ENCODE measurements at regions of chr4 and their contacts with region 1.

Region 1: GRCh38 chr4:87848622-87849351 is 16.0 kb downstream of the MEPE start:
- DNase-seq: peak; percentile 53
- H3K4me3 ChIP-seq: no peak overlapping the region
- H3K27ac ChIP-seq: no peak overlapping the region
- H3K4me1 ChIP-seq: no peaks in the 10 kb centered on the region
- H3K27me3 ChIP-seq: no peaks in the 10 kb centered on the region
- CTCF ChIP-seq: 0 out of 2 replicates have a peak, but pooled peaks have one; percentile 24

Region 2: DNA sequence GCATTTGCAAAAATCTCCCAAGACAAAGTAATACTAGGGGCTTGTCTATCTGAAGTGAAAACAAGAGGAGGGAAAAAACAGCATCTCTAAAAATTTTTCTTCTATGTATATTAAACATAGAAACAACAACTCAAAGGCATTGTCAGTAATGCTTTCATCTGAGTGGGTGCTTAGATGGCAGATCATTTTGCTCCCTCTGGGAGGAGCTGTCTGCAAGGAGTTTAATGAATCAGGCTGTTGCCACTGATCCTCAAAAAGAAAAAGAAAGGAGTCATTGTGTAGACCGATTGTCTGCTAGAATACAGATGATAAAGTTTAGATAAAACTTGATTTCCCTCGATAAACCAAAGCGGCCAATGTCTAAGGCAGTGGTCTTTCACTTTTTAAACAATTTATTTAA is 578.6 kb before region 1 on chr4:
- CTCF ChIA-PET with region 1: no interaction called
- POLR2A ChIA-PET with region 1: no interaction called
- intact Hi-C with region 1: loop called (anchors 10 kb)
- DNase-seq: peak; percentile 51
- H3K4me3 ChIP-seq: no peak overlapping the region
- H3K27ac ChIP-seq: no peak overlapping the region
- H3K4me1 ChIP-seq: no peaks in the 10 kb centered on the region
- H3K27me3 ChIP-seq: no peaks in the 10 kb centered on the region
- CTCF ChIP-seq: peak; percentile 66

Region 3: DNA sequence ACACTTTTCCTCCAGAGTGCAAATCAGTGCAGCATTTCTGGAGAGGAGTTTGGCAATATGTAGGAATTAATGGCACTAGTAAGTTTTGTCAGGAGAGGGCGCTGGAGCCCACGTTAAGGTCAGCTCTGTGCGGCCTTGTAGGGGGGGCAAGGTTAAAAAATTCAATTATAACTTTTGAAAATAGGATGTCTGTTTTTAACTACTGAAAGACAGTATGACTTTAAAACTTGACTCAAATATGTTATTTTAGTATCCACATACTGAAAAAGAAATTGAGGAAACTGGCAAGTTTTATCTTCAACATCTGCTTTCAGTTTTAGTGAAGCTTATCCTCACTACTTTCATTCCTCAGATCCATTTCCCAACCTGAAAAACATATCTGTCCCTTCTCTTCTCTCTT is 495.2 kb before region 1 on chr4:
- CTCF ChIA-PET with region 1: no interaction called
- POLR2A ChIA-PET with region 1: no interaction called
- intact Hi-C with region 1: loop called (anchors 5 kb)
- DNase-seq: peak; percentile 39
- H3K4me3 ChIP-seq: no peak overlapping the region
- H3K27ac ChIP-seq: no peak overlapping the region
- H3K4me1 ChIP-seq: no peaks in the 10 kb centered on the region
- H3K27me3 ChIP-seq: no peaks in the 10 kb centered on the region
- CTCF ChIP-seq: peak; percentile 57

Region 4: GRCh38 chr4:87973283-87974169 is 124.7 kb after region 1 on chr4:
- CTCF ChIA-PET with region 1: interaction called, 19 read pairs
- POLR2A ChIA-PET with region 1: interaction called, 7 read pairs
- intact Hi-C with region 1: loop called (anchors 1 kb)
- DNase-seq: peak; percentile 63
- H3K4me3 ChIP-seq: no peak overlapping the region
- H3K27ac ChIP-seq: no peak overlapping the region
- H3K4me1 ChIP-seq: no peaks in the 10 kb centered on the region
- H3K27me3 ChIP-seq: no peaks in the 10 kb centered on the region
- CTCF ChIP-seq: peak; percentile 58

Region 5: DNA sequence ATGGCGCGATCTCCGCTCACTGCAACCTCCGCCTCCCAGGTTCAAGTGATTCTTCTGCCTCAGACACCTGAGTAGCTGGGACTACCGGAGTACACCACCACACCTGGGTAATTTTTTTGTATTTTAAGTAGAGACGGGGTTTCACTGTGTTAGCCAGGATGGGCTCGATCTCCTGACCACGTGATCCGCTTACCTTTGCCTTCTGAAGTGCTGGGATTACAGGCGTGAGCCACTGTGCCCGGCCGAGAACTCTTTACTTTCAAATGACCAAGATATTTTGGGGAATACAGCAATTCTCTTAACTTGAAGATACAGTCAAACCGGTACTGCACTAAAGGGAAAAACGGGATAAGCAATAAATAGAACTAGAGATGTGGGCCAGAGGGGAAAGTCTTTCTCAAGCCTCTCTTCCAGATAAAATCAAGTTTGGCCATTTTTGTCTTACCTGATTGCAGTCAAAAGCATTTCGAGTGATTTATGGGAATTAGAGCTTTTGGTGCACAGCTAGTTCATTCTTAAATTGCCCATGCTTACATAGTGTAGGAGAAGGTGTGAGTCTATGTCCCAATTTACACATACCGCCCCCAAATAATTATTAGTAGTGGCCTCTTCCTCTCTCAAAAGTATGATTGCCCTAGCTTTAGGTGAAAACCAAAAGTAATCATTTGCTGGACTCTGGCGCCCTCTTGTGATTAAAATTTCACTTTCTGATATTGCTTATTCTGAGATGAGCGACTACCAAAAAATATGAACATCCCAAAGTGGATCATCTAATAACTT is 362.9 kb after region 1 on chr4:
- CTCF ChIA-PET with region 1: interaction called, 8 read pairs
- POLR2A ChIA-PET with region 1: no interaction called
- intact Hi-C with region 1: loop called (anchors 5 kb)
- DNase-seq: peak; percentile 40
- H3K4me3 ChIP-seq: no peak overlapping the region
- H3K27ac ChIP-seq: no peak overlapping the region
- H3K4me1 ChIP-seq: no peaks in the 10 kb centered on the region
- H3K27me3 ChIP-seq: no peaks in the 10 kb centered on the region
- CTCF ChIP-seq: peak; percentile 56

Region 6: DNA sequence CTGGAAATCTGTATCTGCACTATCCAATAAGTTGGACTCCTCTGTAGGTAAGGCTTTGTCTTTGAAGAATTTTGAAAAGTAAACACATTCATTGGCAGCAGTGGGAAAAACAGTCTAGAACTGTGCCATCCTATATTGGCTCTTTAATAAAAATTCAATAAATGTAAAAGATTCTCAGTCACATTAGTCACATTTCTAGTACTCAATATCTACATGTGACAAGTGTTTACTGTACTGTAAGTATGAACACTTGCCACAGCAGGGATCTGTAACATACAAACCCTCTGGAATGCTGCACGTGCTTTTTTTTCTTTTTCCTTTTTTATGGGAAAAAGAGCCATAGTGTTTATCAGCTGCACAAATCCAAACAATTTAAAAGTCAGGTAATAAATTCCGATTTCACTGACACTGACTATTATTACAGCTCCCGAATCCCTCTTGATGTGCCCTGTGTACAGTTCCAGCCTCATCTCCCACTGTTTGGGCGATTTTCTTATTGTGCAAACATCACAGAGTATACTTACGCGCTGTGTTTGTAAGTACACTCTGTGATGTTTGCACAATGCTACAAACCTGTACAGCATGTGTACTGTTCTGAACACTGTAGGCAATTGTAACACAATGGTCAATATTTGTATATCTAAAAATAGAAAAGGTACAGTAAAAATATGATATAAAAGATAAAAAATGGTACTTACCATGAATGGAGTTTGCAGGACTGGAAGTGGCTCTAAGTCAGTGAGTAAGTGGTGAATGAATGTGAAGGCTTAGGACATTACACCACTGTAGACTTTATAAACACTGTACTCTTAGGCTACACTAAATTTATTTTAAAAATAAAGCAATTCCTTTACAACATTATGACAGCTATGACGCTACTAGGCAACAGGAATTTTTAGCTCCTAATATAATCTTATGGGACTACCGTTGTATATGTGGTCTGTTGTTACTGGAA is 666.0 kb after region 1 on chr4:
- CTCF ChIA-PET with region 1: no interaction called
- POLR2A ChIA-PET with region 1: no interaction called
- intact Hi-C with region 1: loop called (anchors 10 kb)
- DNase-seq: no peak
- H3K4me3 ChIP-seq: no peak overlapping the region
- H3K27ac ChIP-seq: no peak overlapping the region
- H3K4me1 ChIP-seq: no peaks in the 10 kb centered on the region
- H3K27me3 ChIP-seq: no peaks in the 10 kb centered on the region
- CTCF ChIP-seq: no peak